Activated T-helper 2 cell treated with anti-CD3 and anti-CD28 coated beads, Interferon-gamma antibody, Interleukin-2, Interleukin-4, amounts not matched to agents 10 μg/mL and 5 μg/mL and 100 μg/mL, durations not matched to agents 14 hours and 24 hours and 36 hours (primary cell): ENCODE measurements at regions of chr6 and their contacts with region 1.

Region 1: DNA sequence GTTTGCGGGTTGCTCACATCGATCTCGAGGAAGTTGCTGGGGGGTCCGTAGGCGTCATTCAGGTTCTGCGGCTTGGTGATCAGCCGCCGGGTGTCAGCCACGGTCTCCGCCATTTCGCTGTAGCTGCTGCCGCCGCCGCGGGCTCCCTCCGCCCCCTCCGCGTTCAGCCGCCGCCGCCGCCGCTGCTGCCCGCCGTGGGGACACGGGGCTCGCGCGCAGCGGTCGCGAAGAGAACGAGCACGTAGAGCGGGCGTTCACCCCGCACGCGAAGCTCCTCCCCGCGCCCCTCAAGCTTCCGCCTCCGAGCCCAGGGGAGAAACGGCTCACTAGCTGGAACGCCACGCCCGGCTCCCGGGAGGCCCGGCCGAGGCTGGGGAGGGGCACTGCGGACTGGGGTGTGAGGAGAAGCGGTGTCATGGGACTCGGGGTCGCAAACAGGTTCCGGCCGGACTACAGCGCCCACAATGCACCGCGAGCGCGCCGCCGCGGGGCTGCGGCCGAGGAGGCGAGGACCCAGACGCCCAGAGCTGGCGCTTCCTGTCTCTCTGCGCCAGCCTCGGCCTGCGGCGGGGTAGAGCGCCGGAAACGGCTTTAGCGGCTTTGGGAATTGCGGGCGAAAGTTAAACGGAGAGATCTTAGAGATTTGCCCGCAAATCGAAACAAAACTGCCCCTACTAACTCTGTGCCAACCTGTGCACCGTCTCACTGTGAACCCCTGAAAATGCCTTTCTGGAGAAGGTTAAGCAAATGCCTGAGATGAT is at the start of gene SNX3:
- DNase-seq: peak; percentile 90
- H3K4me3 Mint-ChIP-seq: peak within 1 kb of the TSS; percentile 90
- H3K27ac Mint-ChIP-seq: peak within 1 kb of the TSS; percentile 93
- H3K4me1 Mint-ChIP-seq: peaks cover 14% of the 10 kb centered on the region
- H3K27me3 Mint-ChIP-seq: peaks cover 8% of the 10 kb centered on the region
- total RNA-seq, gene SNX3: 73.4 and 73.9 TPM in 2 replicates

Region 2: GRCh38 chr6:108294727-108295625 is 34.0 kb after region 1 on chr6 and contains the start of gene AFG1L:
- intact Hi-C with region 1: loop called (anchors 1 kb)
- DNase-seq: peak; percentile 83
- H3K4me3 Mint-ChIP-seq: peak within 1 kb of the TSS; percentile 99
- H3K27ac Mint-ChIP-seq: peak within 1 kb of the TSS; percentile 100
- H3K4me1 Mint-ChIP-seq: peaks cover 23% of the 10 kb centered on the region
- H3K27me3 Mint-ChIP-seq: no peaks in the 10 kb centered on the region
- total RNA-seq, gene AFG1L: 4.7 and 5.5 TPM in 2 replicates